Naive thymus-derived CD4-positive, alpha-beta T cell (primary cell): ENCODE measurements at regions of chr7 and their contacts with region 1.

Region 1: DNA sequence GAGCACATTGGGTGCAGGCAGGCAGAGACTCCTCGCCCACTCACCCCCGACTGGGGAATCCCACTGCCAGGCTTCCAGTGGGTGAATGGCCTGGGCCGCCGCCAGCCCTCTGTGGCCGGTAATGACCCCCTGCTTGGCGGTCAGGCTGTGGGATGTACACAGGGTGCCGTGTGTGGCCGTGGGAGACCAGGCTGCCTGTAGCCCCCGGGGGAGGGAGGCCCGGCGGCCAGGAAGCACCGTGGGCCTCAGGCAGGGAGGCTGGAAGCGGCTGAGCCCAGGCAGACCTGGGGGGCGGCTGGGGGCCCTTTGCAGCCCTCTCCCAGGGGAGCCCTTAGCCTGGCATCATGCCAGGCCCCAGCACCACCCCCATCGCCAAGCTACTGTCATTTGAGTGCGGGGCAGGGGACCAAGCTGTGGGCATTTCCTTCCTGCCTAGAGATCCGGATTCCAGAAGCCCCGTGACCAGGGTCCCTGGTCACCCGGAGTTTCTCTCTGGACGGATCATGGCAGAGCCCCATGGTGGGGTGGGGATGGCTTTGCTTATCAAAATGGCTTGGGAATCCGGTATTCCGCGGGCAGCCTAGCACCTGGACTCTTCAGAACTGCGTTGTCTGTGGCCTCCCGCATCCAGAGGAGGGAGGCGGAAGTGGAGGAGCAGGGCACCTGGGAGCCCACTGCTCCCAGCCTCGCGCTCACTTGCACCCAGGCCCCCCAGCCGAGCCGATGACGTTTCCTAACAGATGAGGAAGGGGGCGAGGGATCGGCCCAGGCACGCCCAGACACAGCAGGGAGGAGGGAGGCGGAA is 1.1 kb downstream of the TTYH3 start:
- DNase-seq: peak in 8 of 9 donors; percentile 24 to 73 (median 37)
- ATAC-seq: no peak
- H3K4me3 ChIP-seq: peak overlapping the region; percentile 58
- H3K4me3 Mint-ChIP-seq: peak overlapping the region; percentile 86 to 96 (median 89)
- H3K27ac ChIP-seq: peak overlapping the region; percentile 79
- H3K27ac Mint-ChIP-seq: peak overlapping the region in 8 of 9 donors; percentile 72 to 88 (median 81)
- H3K4me1 ChIP-seq: peaks cover 3 to 16% of the 10 kb centered on the region in 2 donors
- H3K4me1 Mint-ChIP-seq: peaks cover 0 to 19% (median 15%) of the 10 kb centered on the region in 7 donors
- H3K27me3 ChIP-seq: no peaks in the 10 kb centered on the region
- H3K27me3 Mint-ChIP-seq: peaks cover 0 to 4% (median 0%) of the 10 kb centered on the region in 5 donors

Region 2: DNA sequence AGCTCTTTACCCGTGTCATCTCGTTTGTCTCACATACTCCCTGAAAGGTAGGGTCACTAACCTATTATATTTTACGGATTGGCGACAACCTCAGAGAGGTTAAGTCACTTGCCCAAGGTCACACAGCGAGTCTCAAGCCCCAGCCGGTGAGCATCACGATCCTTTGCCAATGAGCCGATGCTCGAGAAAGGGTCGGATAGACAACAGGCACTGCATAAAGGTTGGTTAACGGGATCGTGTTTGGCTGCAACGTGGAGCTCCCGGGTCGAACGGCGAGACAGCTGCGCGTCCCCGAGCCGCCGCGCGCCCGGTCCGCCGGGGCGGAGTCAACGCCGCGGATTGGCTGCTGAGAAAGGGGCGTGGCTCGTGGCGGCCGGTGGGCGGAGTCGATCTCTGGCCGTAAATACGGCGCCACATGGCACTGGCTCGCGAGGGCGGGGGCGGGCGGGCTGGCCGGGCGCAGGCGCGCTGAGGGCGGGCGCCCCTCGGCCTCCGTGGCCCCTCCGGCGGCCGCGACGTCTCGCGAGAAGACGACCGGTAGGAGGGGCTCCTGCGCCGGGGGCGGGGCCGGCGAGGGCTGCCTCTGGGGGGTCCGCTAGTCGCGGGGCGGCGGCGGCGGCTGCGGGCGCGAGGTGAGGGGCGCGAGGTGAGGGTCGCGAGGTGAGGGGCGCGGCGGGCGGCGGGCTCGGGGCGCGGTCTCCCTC is 229.8 kb before region 1 on chr7 and contains the start of gene CHST12:
- CTCF ChIA-PET with region 1: no interaction called
- POLR2A ChIA-PET with region 1: no interaction called
- intact Hi-C with region 1: loop called in 1 of 2 experiments (anchors 5 kb)
- DNase-seq: peak; percentile 91 to 96 (median 93)
- ATAC-seq: peak; percentile 94
- H3K4me3 ChIP-seq: peak within 1 kb of the TSS; percentile 81
- H3K4me3 Mint-ChIP-seq: peak within 1 kb of the TSS; percentile 80 to 94 (median 89)
- H3K27ac ChIP-seq: peak within 1 kb of the TSS; percentile 70
- H3K27ac Mint-ChIP-seq: peak within 1 kb of the TSS; percentile 60 to 96 (median 84)
- H3K4me1 ChIP-seq: peaks cover 23 to 28% of the 10 kb centered on the region in 2 donors
- H3K4me1 Mint-ChIP-seq: peaks cover 38 to 54% (median 49%) of the 10 kb centered on the region in 7 donors
- H3K27me3 ChIP-seq: no peaks in the 10 kb centered on the region
- H3K27me3 Mint-ChIP-seq: peaks cover 0 to 2% (median 0%) of the 10 kb centered on the region in 5 donors
- total RNA-seq, gene CHST12: 13.3 to 41.6 (median 24.3) TPM

Region 3: GRCh38 chr7:2519119-2519930 is 113.6 kb before region 1 on chr7 and contains the start of gene LFNG:
- CTCF ChIA-PET with region 1: no interaction called
- POLR2A ChIA-PET with region 1: no interaction called
- intact Hi-C with region 1: loop called in 1 of 2 experiments (anchors 2 kb)
- DNase-seq: peak; percentile 64 to 93 (median 77)
- ATAC-seq: peak; percentile 89
- H3K4me3 ChIP-seq: peak within 1 kb of the TSS; percentile 94
- H3K4me3 Mint-ChIP-seq: peak within 1 kb of the TSS; percentile 94 to 99 (median 96)
- H3K27ac ChIP-seq: peak within 1 kb of the TSS; percentile 78
- H3K27ac Mint-ChIP-seq: peak within 1 kb of the TSS; percentile 80 to 92 (median 88)
- H3K4me1 ChIP-seq: peaks cover 20 to 25% of the 10 kb centered on the region in 2 donors
- H3K4me1 Mint-ChIP-seq: peaks cover 14 to 33% (median 30%) of the 10 kb centered on the region in 7 donors
- H3K27me3 ChIP-seq: no peaks in the 10 kb centered on the region
- H3K27me3 Mint-ChIP-seq: peaks cover 0 to 11% (median 0%) of the 10 kb centered on the region in 5 donors
- total RNA-seq, gene LFNG: 114 to 246 (median 151) TPM

Region 4: DNA sequence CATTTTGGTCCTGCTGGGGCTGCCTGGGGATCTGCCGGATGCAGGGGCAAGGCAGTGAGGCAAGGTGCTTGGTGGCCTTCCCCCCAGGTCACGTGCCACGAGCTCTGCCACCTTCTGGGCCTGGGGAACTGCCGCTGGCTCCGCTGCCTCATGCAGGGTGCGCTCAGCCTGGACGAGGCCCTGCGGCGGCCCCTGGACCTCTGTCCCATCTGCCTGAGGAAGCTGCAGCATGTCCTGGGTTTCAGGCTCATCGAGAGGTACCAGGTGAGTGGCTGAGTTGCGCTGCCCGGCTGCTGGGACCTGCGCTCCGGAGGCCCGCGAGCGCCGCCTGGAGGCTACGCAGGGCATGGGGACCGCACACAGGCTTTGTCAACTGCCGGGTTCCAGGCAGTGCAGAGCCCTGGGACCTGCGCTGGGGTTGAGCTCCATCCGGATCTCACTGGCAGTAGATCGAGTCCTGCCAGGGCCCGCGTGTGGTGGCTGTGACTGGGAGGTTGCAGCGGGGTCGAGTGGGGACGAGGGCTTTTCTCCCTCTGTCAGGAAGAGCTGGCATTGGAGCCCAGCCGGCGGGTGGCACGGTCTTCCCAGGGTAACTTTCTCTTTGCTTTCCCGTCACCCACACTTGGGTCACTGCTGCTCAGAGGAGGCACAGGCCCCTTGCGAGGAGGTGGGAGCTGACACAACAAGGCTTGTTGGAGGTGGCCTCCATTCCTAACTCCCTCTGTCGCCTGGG is 76.8 kb after region 1 on chr7:
- CTCF ChIA-PET with region 1: no interaction called
- POLR2A ChIA-PET with region 1: no interaction called
- intact Hi-C with region 1: loop called (anchors 1 to 5 kb)
- DNase-seq: peak; percentile 59 to 84 (median 81)
- ATAC-seq: peak; percentile 90
- H3K4me3 ChIP-seq: peak overlapping the region; percentile 37
- H3K4me3 Mint-ChIP-seq: peak overlapping the region in 7 of 10 donors; percentile 25 to 73 (median 60)
- H3K27ac ChIP-seq: no peak overlapping the region
- H3K27ac Mint-ChIP-seq: peak overlapping the region in 2 of 9 donors; percentile 25 to 63
- H3K4me1 ChIP-seq: peaks cover 24 to 35% of the 10 kb centered on the region in 2 donors
- H3K4me1 Mint-ChIP-seq: peaks cover 15 to 39% (median 31%) of the 10 kb centered on the region in 7 donors
- H3K27me3 ChIP-seq: no peaks in the 10 kb centered on the region
- H3K27me3 Mint-ChIP-seq: peaks cover 0 to 17% (median 8%) of the 10 kb centered on the region in 5 donors